K562 (cell line): ENCODE measurements at regions of chr9 and their contacts with region 1.

Region 1: DNA sequence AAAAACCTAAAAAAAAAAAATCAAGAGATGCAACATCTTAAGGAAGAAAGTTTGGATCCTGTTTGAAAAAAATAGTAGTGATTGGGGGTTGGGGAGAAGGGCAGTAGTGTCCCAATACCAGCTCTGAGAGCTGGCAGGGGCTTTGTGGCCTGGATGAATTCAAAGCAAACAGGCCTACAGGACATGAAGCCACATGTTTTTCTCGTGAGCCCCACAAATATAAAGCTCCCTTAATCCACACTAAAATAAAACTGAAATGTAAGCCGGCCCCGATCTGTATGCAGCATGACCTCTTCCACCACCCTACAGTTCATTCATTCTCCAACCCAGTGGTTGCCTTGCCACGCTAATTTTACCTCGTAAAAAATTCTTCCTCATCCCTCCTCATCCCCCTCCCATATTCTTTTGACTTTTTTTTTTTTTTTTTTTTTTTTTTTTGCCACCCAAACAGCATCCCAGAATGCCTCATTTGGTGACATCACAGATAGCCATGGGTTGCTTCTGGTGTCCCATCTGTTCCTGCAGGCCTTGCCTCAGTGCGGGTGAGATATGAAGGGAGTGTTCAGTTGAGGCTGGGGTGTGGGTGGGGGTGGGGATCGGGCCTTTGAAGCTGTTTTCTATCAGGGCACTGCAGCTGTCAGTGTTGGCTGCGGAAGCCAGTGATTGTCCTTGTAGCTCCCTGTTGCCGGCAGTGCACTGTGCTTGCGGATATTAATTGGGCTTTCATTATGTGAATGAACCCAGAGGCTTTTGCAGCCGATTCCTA is 81.6 kb upstream of the NFIB start:
- DNase-seq: peak; percentile 83 to 95 (median 87)
- ATAC-seq: peak; percentile 95
- H3K4me3 ChIP-seq: no peak overlapping the region
- H3K27ac ChIP-seq: peak overlapping the region; percentile 64; the same call in 2 of the 3 replicates
- H3K4me1 ChIP-seq: peaks cover 7 to 12% of the 10 kb centered on the region in 2 experiments; a peak in 4 of 5 replicates
- H3K27me3 ChIP-seq: no peaks in the 10 kb centered on the region
- CTCF ChIP-seq: no peak
- EP300 ChIP-seq: peak; percentile 86
- POLR2A ChIP-seq: no peak
- RAD21 ChIP-seq: no peak

Region 2: DNA sequence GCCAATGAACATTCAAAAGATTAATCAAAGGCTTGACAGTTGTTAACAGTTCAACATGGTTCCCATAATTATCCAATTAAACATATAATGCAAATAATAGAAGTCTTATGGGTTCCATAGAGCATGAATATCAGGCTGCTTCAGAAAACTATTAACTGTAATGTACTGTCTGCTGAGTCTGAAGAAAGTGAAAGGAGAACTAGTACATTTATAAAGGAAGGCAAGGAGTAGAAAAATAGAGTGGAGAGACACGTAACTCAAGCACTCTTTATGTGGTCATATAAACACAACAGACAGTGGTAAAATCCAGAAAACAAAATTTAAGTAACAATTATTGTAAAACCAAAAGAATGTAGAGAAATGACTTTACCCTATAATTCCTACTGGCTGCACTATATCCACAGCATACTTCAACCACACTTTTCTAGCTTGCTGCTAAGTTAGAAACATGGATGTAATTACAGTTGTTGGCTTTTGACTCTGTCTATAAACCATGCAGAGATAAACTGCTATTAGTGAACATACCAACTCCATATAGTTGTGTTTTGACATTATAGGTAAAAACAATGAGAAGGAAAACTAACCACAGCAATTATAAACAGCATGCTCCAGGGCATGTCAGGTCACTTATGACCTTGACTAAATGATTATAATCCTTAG is 114.2 kb before region 1 on chr9:
- CTCF ChIA-PET with region 1: no interaction called
- POLR2A ChIA-PET with region 1: no interaction called
- in situ Hi-C with region 1: no loop called
- intact Hi-C with region 1: no loop called
- DNase-seq: no peak
- ATAC-seq: no peak
- H3K4me3 ChIP-seq: no peak overlapping the region
- H3K27ac ChIP-seq: no peak overlapping the region
- H3K4me1 ChIP-seq: no peaks in the 10 kb centered on the region
- H3K27me3 ChIP-seq: no peaks in the 10 kb centered on the region
- CTCF ChIP-seq: no peak
- EP300 ChIP-seq: no peak
- POLR2A ChIP-seq: no peak
- RAD21 ChIP-seq: no peak

Region 3: DNA sequence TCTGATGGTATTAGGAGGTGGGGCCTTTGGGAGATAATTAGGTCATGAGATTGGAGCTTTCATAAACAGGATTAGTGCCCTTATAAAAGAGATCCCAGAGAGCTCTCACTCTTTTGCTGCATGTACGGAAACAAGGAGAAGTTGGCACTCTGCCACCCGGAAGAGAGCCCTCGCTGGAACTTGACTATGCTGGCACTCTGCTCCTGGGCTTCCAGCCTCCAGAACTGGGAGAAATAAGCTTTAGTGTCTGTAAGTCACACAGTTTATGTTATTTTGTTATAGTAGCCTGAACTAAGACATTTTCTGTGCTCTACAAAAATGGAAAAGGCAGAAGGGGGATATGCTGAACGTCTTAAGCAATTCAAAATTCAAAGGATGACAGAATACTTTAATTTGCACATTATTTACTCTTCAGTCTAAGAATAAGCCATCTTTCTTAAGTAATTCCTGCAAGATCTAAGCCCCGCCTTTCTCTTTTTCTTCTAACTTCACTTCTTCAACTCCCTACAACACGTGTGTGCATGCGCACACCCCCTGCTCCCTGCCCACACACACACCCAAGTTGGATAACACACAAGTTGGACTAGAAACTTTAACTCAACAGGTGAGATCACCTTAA is 98.9 kb before region 1 on chr9:
- CTCF ChIA-PET with region 1: no interaction called
- POLR2A ChIA-PET with region 1: no interaction called
- in situ Hi-C with region 1: no loop called
- intact Hi-C with region 1: no loop called
- DNase-seq: no peak
- ATAC-seq: no peak
- H3K4me3 ChIP-seq: no peak overlapping the region
- H3K27ac ChIP-seq: no peak overlapping the region
- H3K4me1 ChIP-seq: no peaks in the 10 kb centered on the region
- H3K27me3 ChIP-seq: no peaks in the 10 kb centered on the region
- CTCF ChIP-seq: no peak
- EP300 ChIP-seq: no peak
- POLR2A ChIP-seq: no peak
- RAD21 ChIP-seq: no peak

Region 4: GRCh38 chr9:14362175-14362574 is 33.3 kb before region 1 on chr9:
- CTCF ChIA-PET with region 1: no interaction called
- POLR2A ChIA-PET with region 1: no interaction called
- in situ Hi-C with region 1: no loop called
- intact Hi-C with region 1: loop called (anchors 5 kb)
- DNase-seq: no peak
- ATAC-seq: no peak
- H3K4me3 ChIP-seq: no peak overlapping the region
- H3K27ac ChIP-seq: no peak overlapping the region
- H3K4me1 ChIP-seq: peaks cover 0 to 9% of the 10 kb centered on the region in 2 experiments; a peak in 2 of 5 replicates
- H3K27me3 ChIP-seq: no peaks in the 10 kb centered on the region
- CTCF ChIP-seq: no peak
- EP300 ChIP-seq: no peak
- POLR2A ChIP-seq: no peak
- RAD21 ChIP-seq: no peak